ENCODE measurements at regions of chr17 and their contacts with region 1.

Region 1: GRCh38 chr17:81941790-81942553 is 4.9 kb upstream of the PYCR1 start:
- DNase-seq: no peak
- ATAC-seq: no peak
- H3K4me3 ChIP-seq: no peak overlapping the region
- H3K27ac ChIP-seq: no peak overlapping the region
- H3K4me1 ChIP-seq: peaks cover 0 to 4% (median under 1%) of the 10 kb centered on the region in 4 donors
- H3K27me3 ChIP-seq: no peaks in the 10 kb centered on the region
- CTCF ChIP-seq: no peak
- POLR2A ChIP-seq: no peak

Region 2: DNA sequence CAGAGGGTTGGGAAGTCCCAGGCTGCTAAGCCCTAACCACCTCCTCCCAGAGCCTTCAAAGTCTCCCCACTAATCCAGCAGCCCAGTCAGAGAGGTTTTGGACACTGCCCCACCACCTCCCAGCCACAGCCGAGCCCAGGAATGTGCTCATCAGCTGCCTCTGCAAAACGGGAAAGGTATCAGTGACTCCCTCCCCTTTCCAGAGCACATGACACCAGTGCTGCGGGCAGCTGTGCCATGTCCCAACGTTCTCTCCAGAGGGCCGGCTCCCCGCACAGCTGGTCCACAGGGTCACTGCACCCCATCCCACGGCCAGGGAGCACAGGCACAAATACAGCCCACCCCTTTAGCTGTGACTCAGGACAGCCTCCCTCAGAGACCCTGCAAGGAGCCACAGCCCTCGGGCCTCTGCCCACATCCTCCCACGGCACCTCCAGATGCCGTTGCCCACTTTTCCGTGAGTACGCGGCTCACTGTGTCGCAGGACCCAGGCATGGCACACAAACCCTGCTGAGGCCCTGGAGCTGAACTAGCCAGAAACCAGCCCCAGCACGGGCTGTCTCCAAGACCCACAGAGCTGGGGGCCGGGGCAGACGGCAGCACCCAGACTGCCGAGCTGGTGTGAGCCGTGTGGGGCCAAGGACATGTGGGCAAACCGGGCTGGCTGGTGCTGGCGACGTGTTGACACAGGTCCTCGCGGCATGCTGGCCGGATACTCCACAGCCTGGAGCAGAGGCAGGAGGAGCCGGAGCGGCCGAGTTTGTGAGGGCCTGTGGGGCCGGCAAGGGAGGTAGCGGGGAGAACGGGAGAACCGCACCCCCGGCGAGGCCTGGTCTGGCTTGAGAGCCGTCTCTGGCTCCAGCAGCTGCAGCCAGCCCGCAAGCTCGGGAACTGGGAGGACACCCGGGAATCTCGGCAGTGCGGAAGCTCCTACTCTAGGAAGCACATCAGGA is 100.9 kb before region 1 on chr17:
- intact Hi-C with region 1: no loop called
- DNase-seq: peak in 1 of 3 donors; percentile 69
- ATAC-seq: peak; percentile 27 to 60 (median 40)
- H3K4me3 ChIP-seq: no peak overlapping the region
- H3K27ac ChIP-seq: no peak overlapping the region
- H3K4me1 ChIP-seq: peaks cover 0 to 22% (median 0%) of the 10 kb centered on the region in 4 donors
- H3K27me3 ChIP-seq: no peaks in the 10 kb centered on the region
- CTCF ChIP-seq: no peak
- POLR2A ChIP-seq: no peak

Region 3: GRCh38 chr17:82013341-82013740 is 71.4 kb after region 1 on chr17:
- intact Hi-C with region 1: no loop called
- DNase-seq: no peak
- ATAC-seq: no peak
- H3K4me3 ChIP-seq: no peak overlapping the region
- H3K27ac ChIP-seq: no peak overlapping the region
- H3K4me1 ChIP-seq: no peaks in the 10 kb centered on the region
- H3K27me3 ChIP-seq: no peaks in the 10 kb centered on the region
- CTCF ChIP-seq: no peak
- POLR2A ChIP-seq: no peak

Region 4: GRCh38 chr17:82193520-82194220 is 251.7 kb after region 1 on chr17:
- intact Hi-C with region 1: loop called in 1 of 2 experiments (anchors 10 kb)
- DNase-seq: no peak
- ATAC-seq: peak; percentile 58 to 79 (median 72)
- H3K4me3 ChIP-seq: peak overlapping the region in 2 of 3 donors; percentile 9 to 13
- H3K27ac ChIP-seq: peak overlapping the region in 1 of 3 donors; percentile 13
- H3K4me1 ChIP-seq: peaks cover 0 to 3% (median 0%) of the 10 kb centered on the region in 4 donors
- H3K27me3 ChIP-seq: no peaks in the 10 kb centered on the region
- CTCF ChIP-seq: no peak
- POLR2A ChIP-seq: no peak